ENCODE measurements at regions of chr11 and their contacts with region 1.

Region 1: DNA sequence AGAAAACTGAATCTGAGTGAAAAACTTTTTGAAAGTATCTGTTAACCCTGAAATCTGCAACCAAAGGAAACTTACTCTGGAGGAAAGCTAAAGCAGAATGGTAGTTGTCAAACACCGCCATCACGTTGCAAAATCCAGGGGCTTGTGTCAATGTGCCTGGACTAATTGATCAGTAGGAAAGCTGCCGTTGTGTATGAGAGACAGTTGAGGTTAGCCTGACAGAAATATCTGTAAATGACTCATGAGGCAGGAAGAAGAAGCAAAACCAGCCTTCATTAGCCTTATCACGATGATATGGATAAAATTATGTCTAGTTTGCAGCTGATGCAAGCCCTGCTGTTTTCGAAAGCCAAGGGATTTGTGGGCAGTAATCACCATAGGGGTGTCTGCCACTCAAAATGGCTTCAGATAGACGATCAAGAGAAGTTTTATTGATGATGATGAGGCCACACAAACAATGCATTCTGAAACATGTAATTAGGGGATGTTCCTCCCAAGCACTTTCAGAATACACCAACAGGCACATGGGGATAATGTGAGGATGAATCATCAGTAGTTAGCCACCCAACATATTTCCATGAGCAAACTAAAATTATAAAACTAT is 8.9 kb downstream of the SCGB1A1 start:
- DNase-seq: peak; percentile 39
- CTCF ChIP-seq: no peak

Region 2: GRCh38 chr11:62306227-62306626 is 121.5 kb before region 1 on chr11:
- in situ Hi-C with region 1: no loop called
- DNase-seq: no peak
- CTCF ChIP-seq: no peak

Region 3: DNA sequence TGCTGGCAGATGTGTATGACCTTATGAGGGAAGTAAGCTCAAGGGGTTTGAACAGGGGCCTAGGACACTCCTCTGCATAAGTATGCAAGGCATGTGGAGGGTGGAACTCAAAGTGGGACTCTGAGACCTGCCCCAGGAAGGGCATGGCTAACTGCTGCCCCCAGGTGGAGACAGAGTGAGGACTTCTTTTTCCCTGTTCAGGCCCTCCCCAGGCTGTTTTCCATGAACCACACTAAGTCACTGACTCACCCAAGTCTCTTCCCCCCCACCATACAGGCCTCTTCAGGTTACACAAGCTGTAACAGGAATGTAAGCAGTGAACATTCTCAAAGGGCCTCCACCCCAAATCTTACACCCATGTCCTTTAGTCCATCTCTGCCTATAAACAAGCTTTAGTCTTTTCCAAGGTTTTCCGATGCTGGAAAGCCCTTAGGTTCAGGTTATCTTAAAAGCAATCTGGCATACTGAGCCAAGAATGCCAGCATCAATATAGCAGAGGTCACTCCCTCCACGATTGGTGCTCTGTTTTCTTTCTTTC is 132.9 kb after region 1 on chr11:
- in situ Hi-C with region 1: loop called (anchors 10 kb)
- DNase-seq: no peak
- CTCF ChIP-seq: peak; percentile 72